ENCODE measurements at regions of chr17 and their contacts with region 1.

Region 1: GRCh38 chr17:41648411-41649195 is 24.2 kb upstream of the KRT17 start:
- DNase-seq: peak; percentile 89
- ATAC-seq: peak; percentile 90
- H3K4me3 Mint-ChIP-seq: peak overlapping the region; percentile 55
- H3K27ac Mint-ChIP-seq: peak overlapping the region; percentile 75
- H3K4me1 Mint-ChIP-seq: peaks cover 8% of the 10 kb centered on the region
- H3K27me3 Mint-ChIP-seq: no peaks in the 10 kb centered on the region

Region 2: GRCh38 chr17:41486809-41487720 is 161.5 kb before region 1 on chr17:
- CTCF ChIA-PET with region 1: interaction called, 15 read pairs
- DNase-seq: peak; percentile 52
- ATAC-seq: no peak
- H3K4me3 Mint-ChIP-seq: no peak overlapping the region
- H3K27ac Mint-ChIP-seq: no peak overlapping the region
- H3K4me1 Mint-ChIP-seq: no peaks in the 10 kb centered on the region
- H3K27me3 Mint-ChIP-seq: peaks cover 5% of the 10 kb centered on the region

Region 3: DNA sequence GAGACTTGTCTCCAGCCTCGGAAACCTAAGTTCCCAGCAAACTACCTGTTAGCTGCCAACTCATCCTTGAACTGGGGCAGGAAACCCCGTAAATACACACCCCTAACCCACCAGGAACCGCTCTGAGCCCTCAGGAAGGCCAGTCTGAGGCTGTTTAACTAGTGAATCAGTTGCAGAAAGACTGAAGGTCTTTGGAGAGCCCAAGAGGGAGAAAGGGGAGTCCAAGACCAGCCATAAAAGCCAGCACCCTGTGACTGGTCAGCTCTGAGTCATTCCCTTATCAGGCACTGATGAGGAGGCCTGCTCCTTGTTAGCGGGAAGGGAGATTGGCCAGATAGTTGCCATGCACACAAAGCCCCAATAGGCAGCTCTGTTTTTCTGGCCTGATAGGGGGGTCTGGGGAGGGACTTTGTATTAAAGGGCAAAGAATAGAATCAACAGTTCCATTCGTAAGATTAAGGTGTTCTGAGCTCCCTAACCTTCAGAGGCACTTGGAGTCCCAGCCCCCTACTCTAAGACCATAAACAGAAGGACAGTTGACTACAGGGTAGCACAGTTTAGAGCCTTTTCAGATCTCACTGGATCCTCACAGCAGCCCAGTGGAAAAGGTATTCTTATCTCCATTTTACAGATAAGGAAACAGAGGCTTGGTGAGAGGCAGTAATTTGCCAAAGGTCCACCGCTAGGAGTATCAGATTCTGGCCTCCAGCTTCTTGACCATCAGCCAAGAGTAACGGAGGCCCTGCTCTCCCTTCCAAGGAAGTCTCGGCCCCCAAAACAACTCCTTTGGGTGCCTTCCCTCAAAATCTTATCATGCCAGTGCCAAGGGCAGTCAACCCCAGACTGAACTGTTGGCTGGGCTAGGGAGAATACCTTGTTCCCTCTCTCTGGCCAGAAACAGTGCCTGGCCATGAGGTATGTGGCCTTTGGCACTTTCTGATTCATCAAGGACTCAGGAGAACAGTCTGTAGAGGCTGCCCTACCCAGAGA is 118.2 kb before region 1 on chr17:
- CTCF ChIA-PET with region 1: interaction called, 12 read pairs
- DNase-seq: no peak
- ATAC-seq: no peak
- H3K4me3 Mint-ChIP-seq: no peak overlapping the region
- H3K27ac Mint-ChIP-seq: no peak overlapping the region
- H3K4me1 Mint-ChIP-seq: no peaks in the 10 kb centered on the region
- H3K27me3 Mint-ChIP-seq: peaks cover 71% of the 10 kb centered on the region

Region 4: DNA sequence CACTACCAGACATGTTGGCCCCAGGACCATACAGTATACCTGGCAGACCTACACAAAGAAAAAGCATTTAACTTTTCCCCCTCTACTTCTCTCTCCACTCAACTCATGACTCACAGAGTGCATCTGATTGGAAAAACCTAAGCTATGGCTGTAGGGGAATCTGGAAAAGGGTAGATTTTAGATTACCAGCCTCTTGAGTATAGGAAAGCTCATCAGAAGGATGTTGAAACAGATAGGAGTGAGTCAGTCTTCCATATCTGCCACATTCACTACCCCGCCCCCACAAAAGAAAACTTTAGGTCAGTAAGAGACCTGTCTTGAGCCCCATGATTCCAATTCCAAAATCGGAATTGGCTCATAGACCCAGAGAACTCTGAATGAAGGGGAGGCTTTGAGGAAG is 89.1 kb before region 1 on chr17:
- CTCF ChIA-PET with region 1: interaction called, 236 read pairs
- DNase-seq: no peak
- ATAC-seq: no peak
- H3K4me3 Mint-ChIP-seq: no peak overlapping the region
- H3K27ac Mint-ChIP-seq: no peak overlapping the region
- H3K4me1 Mint-ChIP-seq: no peaks in the 10 kb centered on the region
- H3K27me3 Mint-ChIP-seq: peaks cover 72% of the 10 kb centered on the region

Region 5: DNA sequence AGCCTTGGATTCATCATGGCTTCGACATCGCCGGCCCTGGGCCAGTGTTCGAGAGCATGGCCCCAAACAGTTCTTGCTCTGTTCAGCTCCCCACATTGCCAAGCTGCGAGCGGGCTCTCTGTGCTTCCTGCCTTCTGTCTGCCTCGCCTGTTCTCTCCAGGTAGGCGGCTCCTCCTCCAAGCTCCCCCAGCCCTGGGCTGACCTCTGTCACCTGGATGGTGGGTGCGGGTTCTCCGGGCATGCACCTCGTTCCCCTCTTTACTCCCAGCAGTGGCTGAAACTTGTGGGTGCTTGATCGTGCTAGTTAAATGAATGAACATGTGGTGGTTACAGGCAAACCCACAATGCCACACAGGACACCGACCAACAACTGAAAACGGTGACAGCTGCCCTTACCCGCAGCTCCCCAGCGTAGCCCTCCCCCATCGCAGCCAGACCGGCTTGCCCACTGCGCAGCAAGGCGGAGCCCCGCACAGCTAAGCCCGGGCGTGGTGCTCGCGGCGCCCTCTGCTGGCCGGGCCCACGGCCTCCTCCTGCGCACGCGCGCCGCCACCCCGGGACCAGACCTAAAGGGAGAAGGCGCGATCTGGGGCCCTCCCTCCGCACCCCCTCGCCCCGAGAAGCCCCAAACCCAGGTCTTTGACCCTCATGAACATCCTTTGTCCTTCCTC is 17.1 kb after region 1 on chr17:
- CTCF ChIA-PET with region 1: interaction called, 558 read pairs
- DNase-seq: peak; percentile 92
- ATAC-seq: peak; percentile 89
- H3K4me3 Mint-ChIP-seq: peak overlapping the region; percentile 71
- H3K27ac Mint-ChIP-seq: peak overlapping the region; percentile 94
- H3K4me1 Mint-ChIP-seq: peaks cover 45% of the 10 kb centered on the region
- H3K27me3 Mint-ChIP-seq: peaks cover 13% of the 10 kb centered on the region

Region 6: GRCh38 chr17:41688699-41689496 is 40.3 kb after region 1 on chr17 and contains the start of gene EIF1:
- CTCF ChIA-PET with region 1: interaction called, 17 read pairs
- DNase-seq: peak; percentile 100
- ATAC-seq: peak; percentile 74
- H3K4me3 Mint-ChIP-seq: peak within 1 kb of the TSS; percentile 94
- H3K27ac Mint-ChIP-seq: peak within 1 kb of the TSS; percentile 99
- H3K4me1 Mint-ChIP-seq: peaks cover 29% of the 10 kb centered on the region
- H3K27me3 Mint-ChIP-seq: no peaks in the 10 kb centered on the region
- total RNA-seq, gene EIF1: 593 to 900 TPM

Measured in activated CD8-positive, alpha-beta memory T cell treated with anti-CD3 and anti-CD28 coated beads, Interleukin-2, amount 10 ng/mL, durations not matched to agents 7 days and 5 days (primary cell).